ENCODE measurements at regions of chr4 and their contacts with region 1.

Region 1: GRCh38 chr4:15396157-15396800 is 31.6 kb upstream of the C1QTNF7 start:
- DNase-seq: peak; percentile 76
- ATAC-seq: peak; percentile 75
- H3K4me3 Mint-ChIP-seq: no peak overlapping the region
- H3K27ac Mint-ChIP-seq: no peak overlapping the region
- H3K4me1 Mint-ChIP-seq: peaks cover 13% of the 10 kb centered on the region
- H3K27me3 Mint-ChIP-seq: no peaks in the 10 kb centered on the region

Region 2: DNA sequence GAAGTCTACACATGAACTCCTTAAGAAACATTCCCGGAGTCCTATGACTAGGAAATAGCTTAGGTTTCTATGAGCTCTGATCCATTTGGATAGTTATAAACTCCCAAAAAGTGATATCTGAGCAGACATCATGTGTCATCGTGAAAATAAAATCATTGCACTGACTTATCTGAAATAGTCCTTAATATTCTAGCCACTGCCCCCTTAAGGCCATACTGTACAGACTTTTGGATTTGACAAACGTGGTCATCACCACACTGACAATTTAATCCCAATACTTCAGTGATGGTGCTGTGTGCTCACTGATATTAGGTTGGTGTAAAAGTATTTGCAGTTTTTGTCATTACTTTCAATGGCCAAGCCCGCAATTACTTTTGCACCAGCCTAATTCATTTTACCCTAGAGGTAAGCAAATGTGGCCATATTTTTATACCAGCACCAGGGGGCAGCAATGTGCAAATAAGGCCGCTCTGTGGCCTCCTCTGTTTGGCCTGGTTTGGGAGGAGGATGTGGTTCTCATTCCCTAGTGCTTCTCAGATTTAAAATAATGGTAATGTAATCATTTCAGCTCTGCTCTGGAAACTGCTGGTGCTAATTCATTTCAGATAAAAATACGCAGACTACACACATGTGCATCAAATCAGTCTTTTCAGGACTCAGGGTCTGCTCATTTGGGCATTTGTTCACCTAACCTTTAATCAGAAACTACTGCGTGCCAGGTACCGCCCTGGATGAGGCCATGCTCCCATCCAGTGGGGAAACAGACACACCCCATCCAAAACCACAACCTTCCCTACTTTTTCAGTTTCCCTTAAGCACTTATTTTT is 164.8 kb before region 1 on chr4:
- CTCF ChIA-PET with region 1: interaction called, 45 read pairs
- POLR2A ChIA-PET with region 1: no interaction called
- DNase-seq: peak; percentile 84
- ATAC-seq: peak; percentile 83
- H3K4me3 Mint-ChIP-seq: no peak overlapping the region
- H3K27ac Mint-ChIP-seq: no peak overlapping the region
- H3K4me1 Mint-ChIP-seq: peaks cover 31% of the 10 kb centered on the region
- H3K27me3 Mint-ChIP-seq: peaks cover 3% of the 10 kb centered on the region

Region 3: DNA sequence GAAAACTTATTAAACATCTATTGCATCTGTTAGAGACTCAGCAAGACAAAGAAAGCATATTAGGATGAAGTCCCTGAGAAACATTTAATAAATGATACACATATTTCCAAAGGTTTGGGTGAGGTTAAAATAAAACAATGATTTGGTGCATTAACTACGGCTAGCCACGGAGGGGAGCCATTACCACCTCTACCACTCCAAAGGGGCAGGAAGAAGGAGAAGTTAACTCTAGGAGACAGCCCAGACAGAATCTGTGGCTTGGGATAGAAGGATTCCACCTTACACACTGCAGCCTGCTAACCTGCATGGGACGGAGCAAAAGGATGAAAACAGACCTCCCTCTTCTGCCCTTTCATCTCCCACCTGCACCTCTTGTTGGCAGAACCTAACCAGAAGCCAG is 157.6 kb before region 1 on chr4:
- CTCF ChIA-PET with region 1: interaction called, 45 read pairs
- POLR2A ChIA-PET with region 1: no interaction called
- DNase-seq: peak; percentile 44
- ATAC-seq: peak; percentile 30
- H3K4me3 Mint-ChIP-seq: no peak overlapping the region
- H3K27ac Mint-ChIP-seq: no peak overlapping the region
- H3K4me1 Mint-ChIP-seq: peaks cover 12% of the 10 kb centered on the region
- H3K27me3 Mint-ChIP-seq: peaks cover 6% of the 10 kb centered on the region

Region 4: GRCh38 chr4:15336410-15337172 is 59.7 kb before region 1 on chr4:
- CTCF ChIA-PET with region 1: no interaction called
- POLR2A ChIA-PET with region 1: no interaction called
- DNase-seq: no peak
- ATAC-seq: no peak
- H3K4me3 Mint-ChIP-seq: no peak overlapping the region
- H3K27ac Mint-ChIP-seq: no peak overlapping the region
- H3K4me1 Mint-ChIP-seq: no peaks in the 10 kb centered on the region
- H3K27me3 Mint-ChIP-seq: peaks cover 5% of the 10 kb centered on the region

Region 5: DNA sequence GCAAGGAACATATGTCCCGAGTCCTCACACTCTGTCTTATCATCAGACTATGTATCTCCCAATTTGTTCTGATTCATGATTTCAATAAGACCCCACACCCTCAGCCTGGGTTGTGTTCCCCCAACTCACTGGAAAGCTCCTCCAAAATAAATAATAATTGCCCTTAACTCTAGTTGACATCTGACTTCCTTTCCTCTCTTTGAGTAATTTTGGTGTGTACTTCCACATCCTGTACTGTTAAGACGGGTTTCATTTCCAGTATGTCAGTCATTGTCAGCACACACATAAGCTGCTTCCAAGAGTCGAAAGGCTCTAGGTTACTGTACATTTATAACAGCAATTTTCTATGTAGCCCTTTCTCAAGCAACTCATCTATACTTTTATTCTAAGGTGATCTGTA is 20.6 kb before region 1 on chr4:
- CTCF ChIA-PET with region 1: interaction called, 29 read pairs
- POLR2A ChIA-PET with region 1: interaction called, 4 read pairs
- DNase-seq: no peak
- ATAC-seq: peak; percentile 76
- H3K4me3 Mint-ChIP-seq: no peak overlapping the region
- H3K27ac Mint-ChIP-seq: peak overlapping the region; percentile 14
- H3K4me1 Mint-ChIP-seq: peaks cover 29% of the 10 kb centered on the region
- H3K27me3 Mint-ChIP-seq: no peaks in the 10 kb centered on the region

Region 6: DNA sequence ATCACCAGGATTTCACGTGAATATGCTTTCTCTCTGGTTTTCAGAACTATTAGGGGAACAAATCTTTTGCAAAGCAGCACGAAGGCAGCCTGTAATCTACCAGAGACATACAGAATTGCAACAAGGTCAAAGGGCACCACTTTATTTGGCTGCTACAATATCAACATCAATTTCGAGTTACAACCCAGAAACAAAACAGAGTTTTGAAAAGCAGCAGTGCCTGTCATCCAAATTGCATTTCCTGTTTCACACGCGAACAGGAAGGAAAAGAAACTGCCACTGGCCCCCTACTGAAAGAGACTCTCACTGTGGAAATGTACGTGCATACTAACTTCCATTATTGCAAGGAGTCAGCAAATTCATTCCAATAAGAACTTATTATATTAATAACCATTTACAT is 14.5 kb after region 1 on chr4:
- CTCF ChIA-PET with region 1: interaction called, 36 read pairs
- POLR2A ChIA-PET with region 1: no interaction called
- DNase-seq: peak; percentile 56
- ATAC-seq: peak; percentile 82
- H3K4me3 Mint-ChIP-seq: peak overlapping the region; percentile 56
- H3K27ac Mint-ChIP-seq: peak overlapping the region; percentile 85
- H3K4me1 Mint-ChIP-seq: peaks cover 34% of the 10 kb centered on the region
- H3K27me3 Mint-ChIP-seq: no peaks in the 10 kb centered on the region

Region 7: DNA sequence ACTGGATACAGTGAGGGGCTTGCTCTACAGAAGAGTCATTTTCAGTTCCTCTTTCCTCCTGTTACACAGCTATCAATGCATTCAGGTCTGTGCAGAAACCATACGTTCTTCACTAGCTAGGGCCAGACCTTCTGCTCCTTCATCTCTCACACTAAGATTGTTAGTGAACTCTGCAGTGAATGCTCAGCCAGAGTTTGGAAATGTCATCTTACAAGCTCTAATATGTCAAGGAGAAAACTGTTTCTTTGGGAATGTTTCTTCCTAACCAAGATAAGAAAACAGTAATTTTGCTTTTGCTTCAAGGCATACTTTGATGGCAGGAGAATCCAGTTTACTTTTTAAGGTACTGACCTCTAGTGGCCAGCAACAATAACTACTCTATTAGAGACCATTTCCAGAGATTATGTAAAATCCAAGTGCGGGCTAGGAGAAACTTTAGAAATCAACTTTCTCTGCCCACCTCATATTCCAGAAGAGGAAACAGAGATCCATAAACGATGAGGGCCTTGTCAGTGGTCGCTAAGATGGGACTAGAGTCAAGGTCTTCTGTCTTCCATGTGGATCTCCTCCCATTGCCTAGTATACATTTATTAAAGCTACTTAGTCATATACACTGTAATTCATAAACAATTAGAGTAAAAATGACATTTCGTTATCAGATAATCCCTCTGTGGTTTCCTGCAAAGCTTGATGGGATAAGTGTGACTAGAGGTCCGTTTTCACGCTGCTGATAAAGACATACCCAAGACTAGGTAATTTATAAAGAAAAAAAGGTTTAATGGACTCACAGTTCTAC is 61.3 kb after region 1 on chr4:
- CTCF ChIA-PET with region 1: interaction called, 25 read pairs
- POLR2A ChIA-PET with region 1: no interaction called
- DNase-seq: no peak
- ATAC-seq: peak; percentile 60
- H3K4me3 Mint-ChIP-seq: no peak overlapping the region
- H3K27ac Mint-ChIP-seq: no peak overlapping the region
- H3K4me1 Mint-ChIP-seq: no peaks in the 10 kb centered on the region
- H3K27me3 Mint-ChIP-seq: peaks cover 11% of the 10 kb centered on the region

Region 8: GRCh38 chr4:15506464-15506863 is 110.2 kb after region 1 on chr4:
- CTCF ChIA-PET with region 1: no interaction called
- POLR2A ChIA-PET with region 1: no interaction called
- DNase-seq: no peak
- ATAC-seq: no peak
- H3K4me3 Mint-ChIP-seq: no peak overlapping the region
- H3K27ac Mint-ChIP-seq: no peak overlapping the region
- H3K4me1 Mint-ChIP-seq: no peaks in the 10 kb centered on the region
- H3K27me3 Mint-ChIP-seq: no peaks in the 10 kb centered on the region

Measured in activated CD8-positive, alpha-beta T cell treated with anti-CD3 and anti-CD28 coated beads, Interleukin-2, amount 10 ng/mL, durations not matched to agents 7 days and 5 days (primary cell).